ENCODE measurements at regions of chr13 and their contacts with region 1.

Region 1: GRCh38 chr13:26929971-26930730 is 169.6 kb upstream of the GPR12 start:
- DNase-seq: peak; percentile 56 to 96
- H3K4me3 ChIP-seq: peak overlapping the region in 3 of 4 experiments; percentile 20 to 51 (median 23); a peak in 4 of 8 replicates
- H3K27ac ChIP-seq: no peak overlapping the region
- H3K4me1 ChIP-seq: peaks cover 0 to 3% (median 0%) of the 10 kb centered on the region in 4 experiments; a peak in 1 of 7 replicates
- H3K27me3 ChIP-seq: no peaks in the 10 kb centered on the region
- CTCF ChIP-seq: peak; percentile 80 to 86 (median 84)
- EP300 ChIP-seq: no peak
- POLR2A ChIP-seq: no peak; a peak in 1 of 3 replicates
- RAD21 ChIP-seq: peak; percentile 88 to 95

Region 2: GRCh38 chr13:26914624-26915023 is 15.5 kb before region 1 on chr13:
- CTCF ChIA-PET with region 1: interaction called, 32 read pairs
- POLR2A ChIA-PET with region 1: no interaction called
- DNase-seq: no peak
- H3K4me3 ChIP-seq: no peak overlapping the region
- H3K27ac ChIP-seq: no peak overlapping the region
- H3K4me1 ChIP-seq: no peaks in the 10 kb centered on the region
- H3K27me3 ChIP-seq: no peaks in the 10 kb centered on the region; a peak in 1 of 7 replicates
- CTCF ChIP-seq: no peak
- EP300 ChIP-seq: no peak
- POLR2A ChIP-seq: no peak
- RAD21 ChIP-seq: no peak